ENCODE measurements at regions of chr9 and their contacts with region 1.

Region 1: DNA sequence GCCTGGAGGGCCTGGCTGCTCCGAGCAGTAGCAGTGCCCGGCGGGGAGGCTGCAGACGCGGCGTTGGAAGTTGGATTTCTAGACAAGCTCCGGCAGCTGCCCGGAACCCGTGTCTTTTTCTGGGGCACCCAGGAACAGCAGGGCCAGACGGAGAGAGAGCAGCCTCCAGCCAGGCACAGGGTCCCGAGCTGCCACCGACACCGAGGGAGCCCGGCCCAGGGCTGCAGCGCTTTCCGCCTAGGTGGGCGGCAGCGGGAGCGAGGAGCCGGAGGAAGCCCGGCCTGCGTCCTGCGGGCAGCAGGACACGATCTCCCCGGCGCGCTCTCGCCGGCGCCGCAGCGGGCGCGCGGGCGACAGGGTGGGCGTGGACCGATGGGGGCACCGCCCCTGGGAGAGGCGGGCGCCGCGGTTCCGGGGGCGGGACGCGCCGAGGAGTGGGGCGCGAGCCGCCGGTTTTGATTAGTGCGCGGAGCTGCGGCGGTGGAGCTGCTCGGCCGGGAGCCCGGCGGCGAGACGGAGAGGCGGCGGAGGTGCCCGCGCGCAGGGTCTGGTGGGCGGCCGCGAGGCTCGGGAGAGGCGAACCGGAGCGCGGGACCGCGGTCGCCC is at the start of gene UGCG:
- DNase-seq: peak; percentile 95
- ATAC-seq: peak; percentile 99
- total RNA-seq, gene UGCG: 12.8 TPM

Region 2: GRCh38 chr9:111914749-111915424 is 18.4 kb after region 1 on chr9:
- intact Hi-C with region 1: loop called (anchors 1 kb)
- DNase-seq: no peak
- ATAC-seq: no peak